ENCODE measurements at regions of chr1 and their contacts with region 1.

Region 1: DNA sequence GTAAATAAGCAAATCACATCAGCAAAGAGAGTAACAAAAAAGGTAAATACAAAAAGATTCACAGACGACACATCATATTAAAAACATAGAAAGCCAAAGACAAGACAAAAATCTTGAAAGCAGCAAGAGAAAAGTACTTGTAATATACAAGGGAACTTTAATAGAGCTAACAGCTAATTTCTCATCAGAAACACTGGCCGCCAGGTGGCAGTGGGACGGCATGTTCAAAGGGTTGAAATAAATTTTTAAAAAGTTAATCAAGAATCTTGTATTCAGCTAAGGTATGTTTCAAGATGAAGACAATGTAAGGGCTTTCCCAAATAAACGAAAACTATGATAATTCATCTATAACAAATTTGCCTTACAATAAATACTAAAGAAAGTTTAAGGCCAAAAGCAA is 358.1 kb downstream of the LRRIQ3 start:
- DNase-seq: peak; percentile 12
- H3K4me3 ChIP-seq: no peak overlapping the region
- H3K27ac ChIP-seq: no peak overlapping the region
- H3K4me1 ChIP-seq: no peaks in the 10 kb centered on the region
- CTCF ChIP-seq: peak; percentile 73

Region 2: GRCh38 chr1:73783352-73783751 is 56.6 kb before region 1 on chr1:
- CTCF ChIA-PET with region 1: no interaction called
- POLR2A ChIA-PET with region 1: no interaction called
- intact Hi-C with region 1: no loop called
- DNase-seq: no peak
- H3K4me3 ChIP-seq: no peak overlapping the region
- H3K27ac ChIP-seq: no peak overlapping the region
- H3K4me1 ChIP-seq: no peaks in the 10 kb centered on the region
- CTCF ChIP-seq: no peak

Region 3: DNA sequence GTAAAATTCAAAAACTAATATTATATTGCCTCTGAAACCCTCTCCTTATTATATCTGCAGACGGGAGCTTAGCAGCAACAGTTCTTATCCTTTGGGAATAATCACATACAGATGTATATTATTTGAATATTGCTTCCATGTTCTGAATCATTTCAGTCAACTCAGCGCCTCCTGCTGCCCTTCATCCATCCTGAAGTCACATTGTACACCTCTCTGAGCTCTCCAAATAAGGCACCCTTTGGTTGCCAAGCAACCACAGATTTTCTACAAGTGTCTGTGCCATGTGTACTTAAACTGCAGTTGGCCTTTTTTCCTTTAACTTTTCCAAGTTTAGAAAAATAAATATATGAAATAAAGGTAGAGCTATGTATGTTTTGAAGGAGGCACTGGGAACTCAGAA is 26.2 kb before region 1 on chr1:
- CTCF ChIA-PET with region 1: no interaction called
- POLR2A ChIA-PET with region 1: no interaction called
- intact Hi-C with region 1: no loop called
- DNase-seq: no peak
- H3K4me3 ChIP-seq: no peak overlapping the region
- H3K27ac ChIP-seq: no peak overlapping the region
- H3K4me1 ChIP-seq: no peaks in the 10 kb centered on the region
- CTCF ChIP-seq: no peak

Region 4: GRCh38 chr1:73998348-73998959 is 158.5 kb after region 1 on chr1:
- CTCF ChIA-PET with region 1: no interaction called
- POLR2A ChIA-PET with region 1: no interaction called
- intact Hi-C with region 1: loop called (anchors 5 kb)
- DNase-seq: peak; percentile 43
- H3K4me3 ChIP-seq: no peak overlapping the region
- H3K27ac ChIP-seq: no peak overlapping the region
- H3K4me1 ChIP-seq: no peaks in the 10 kb centered on the region
- CTCF ChIP-seq: peak; percentile 76

Region 5: DNA sequence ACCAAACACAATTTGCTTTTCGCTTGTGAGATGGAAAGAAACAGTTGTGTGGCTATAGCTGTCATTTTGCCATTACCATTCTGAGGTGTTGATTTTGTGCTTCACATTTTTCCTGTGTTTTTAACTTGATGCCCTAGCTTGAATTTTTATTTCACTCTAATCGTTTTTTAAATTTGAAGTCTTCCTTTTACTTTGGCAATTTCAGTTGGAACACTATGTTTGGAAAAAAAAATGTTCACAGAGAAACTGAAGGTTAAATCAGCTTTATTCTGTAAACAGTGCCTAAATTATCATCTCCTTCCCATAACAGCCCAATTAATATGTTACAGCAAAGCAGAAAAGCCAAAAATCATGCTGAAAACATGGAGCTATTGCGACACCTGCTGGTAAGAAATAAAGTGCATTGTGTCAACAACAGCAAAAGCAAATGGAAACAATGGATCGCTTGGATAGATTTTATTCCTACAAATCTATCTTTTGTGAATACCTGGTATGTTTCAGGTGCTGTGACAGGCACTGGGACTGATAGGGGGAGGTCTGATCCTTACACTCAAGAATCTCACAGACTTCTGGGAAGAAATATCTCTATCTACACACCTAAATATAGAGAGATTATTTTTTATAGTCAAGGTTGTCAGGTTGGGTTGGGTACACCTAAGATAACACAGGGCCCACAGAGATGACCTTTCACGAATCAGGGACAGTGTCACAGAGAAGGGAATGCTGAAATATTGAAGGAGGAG is 849.9 kb after region 1 on chr1:
- CTCF ChIA-PET with region 1: no interaction called
- POLR2A ChIA-PET with region 1: no interaction called
- intact Hi-C with region 1: loop called (anchors 10 kb)
- DNase-seq: peak; percentile 64
- H3K4me3 ChIP-seq: no peak overlapping the region
- H3K27ac ChIP-seq: no peak overlapping the region
- H3K4me1 ChIP-seq: no peaks in the 10 kb centered on the region
- CTCF ChIP-seq: peak; percentile 95

Measured in OCI-LY7 (cell line).